ENCODE measurements at regions of chr9 and their contacts with region 1.

Region 1: DNA sequence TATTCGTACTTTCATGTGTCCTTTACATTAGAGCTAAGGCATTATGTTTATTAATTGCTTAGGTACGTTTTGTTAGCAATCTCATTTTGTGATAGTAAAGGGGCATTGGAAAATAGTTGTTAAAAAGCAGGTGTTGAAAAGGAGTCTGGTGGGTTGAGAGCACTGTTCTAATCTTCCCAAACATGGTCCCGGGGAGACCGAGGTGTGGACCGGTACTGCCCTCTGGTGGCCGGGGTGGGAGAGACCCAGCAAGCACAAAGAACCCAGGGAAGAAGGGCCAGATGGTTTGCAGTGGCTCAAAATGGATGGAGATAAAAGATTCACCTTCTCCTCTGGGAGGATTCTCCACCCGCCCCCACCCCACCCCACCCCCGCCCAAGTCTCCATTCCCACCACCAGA is 26.1 kb downstream of the IDNK start:
- DNase-seq: no peak
- H3K4me3 ChIP-seq: no peak overlapping the region
- CTCF ChIP-seq: peak; percentile 84

Region 2: DNA sequence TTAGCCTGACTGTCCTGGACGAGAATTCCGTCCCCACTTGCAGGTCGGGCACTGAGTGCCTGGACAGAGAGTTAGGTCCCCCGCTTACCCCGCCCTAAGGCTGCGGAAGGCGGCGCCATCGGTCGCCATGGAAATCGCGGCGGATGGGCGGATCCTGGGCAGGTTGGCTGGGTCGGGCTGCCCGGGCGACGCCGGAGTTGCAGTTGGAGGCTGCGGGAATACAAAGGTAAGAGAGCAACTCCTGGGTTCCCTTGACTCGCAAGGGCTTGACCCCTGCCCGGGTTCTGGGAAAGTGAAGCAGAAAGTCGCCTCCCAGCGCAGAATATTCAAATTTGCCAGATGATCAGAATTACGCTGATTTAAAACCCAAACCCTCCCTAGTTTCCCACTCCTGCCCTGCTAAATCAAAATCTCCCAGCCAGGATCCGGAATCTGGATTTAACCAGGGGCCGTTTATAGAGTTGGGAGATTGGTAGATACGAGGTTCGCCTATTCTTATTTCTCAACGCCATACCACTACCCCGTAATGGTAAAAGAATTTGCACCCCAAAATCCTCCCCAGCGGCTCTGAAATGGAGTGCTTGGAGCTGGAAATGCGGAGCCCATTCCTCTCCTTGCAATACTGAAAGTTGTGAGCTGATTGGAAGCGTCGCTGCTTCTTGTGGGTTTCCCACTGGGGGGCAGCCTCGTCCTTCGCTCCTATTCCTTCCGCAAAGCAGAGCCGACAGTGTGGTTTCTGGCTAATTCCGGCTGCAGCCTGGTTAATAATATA is 429.7 kb before region 1 on chr9:
- CTCF ChIA-PET with region 1: interaction called, 11 read pairs
- POLR2A ChIA-PET with region 1: no interaction called
- DNase-seq: peak; percentile 12
- H3K4me3 ChIP-seq: peak overlapping the region; percentile 62
- CTCF ChIP-seq: peak; percentile 77

Region 3: DNA sequence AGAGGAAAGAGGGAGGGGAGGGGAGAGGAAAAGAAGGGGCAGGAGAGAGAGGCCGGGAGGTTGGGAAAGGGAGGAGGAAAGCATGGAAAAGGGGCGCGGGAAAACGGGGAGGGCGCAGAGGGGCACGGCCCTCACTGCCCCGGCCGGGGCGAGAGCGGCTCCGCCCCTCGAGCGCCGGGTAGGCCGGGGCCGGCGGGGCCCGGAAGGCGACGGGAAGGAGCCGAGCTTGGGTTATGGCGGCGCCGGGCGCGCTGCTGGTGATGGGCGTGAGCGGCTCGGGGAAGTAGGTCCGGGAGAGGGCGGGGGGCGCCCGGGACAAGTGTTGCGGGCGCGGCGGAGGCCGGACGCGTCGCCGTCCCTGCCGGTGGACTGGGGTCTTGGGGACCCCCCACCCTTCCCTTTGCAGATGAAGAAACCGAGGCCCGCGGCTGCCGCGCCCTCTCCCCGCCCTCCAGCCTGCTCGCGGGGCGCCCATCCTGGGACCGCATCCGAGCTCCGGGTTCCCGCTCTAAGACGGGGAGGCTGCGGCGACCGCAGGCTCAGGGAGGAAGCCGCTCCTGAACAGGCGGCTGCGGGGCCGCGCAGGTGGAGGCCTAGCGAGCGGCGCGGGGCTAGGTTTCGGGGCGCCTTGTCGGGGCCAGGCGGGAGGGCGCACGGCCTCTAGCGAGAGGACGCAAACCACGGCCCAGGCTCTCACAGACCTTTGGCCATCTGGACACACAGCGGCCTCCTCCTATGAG is 26.0 kb before region 1 on chr9 and contains the start of gene IDNK:
- CTCF ChIA-PET with region 1: interaction called, 18 read pairs
- POLR2A ChIA-PET with region 1: no interaction called
- DNase-seq: no peak
- H3K4me3 ChIP-seq: peak within 1 kb of the TSS; percentile 65
- CTCF ChIP-seq: no peak

Region 4: DNA sequence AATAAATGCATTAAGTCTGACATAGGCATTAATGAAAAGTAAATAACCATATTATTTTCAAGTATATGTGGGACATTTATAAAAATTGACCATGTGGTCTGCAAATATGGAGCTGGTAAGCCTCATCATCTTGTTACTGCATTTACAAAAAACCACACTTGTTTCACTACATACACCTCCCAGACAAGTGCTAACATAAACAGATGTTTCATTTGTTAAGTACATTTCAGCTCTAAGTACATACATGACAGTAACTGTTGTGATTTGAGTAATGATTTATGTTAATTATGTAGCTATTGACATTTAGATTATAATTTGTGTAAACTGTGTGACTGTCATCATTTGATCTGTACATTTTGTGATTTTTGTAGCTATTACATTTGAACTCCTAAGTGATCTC is 12.3 kb before region 1 on chr9:
- CTCF ChIA-PET with region 1: interaction called, 25 read pairs
- POLR2A ChIA-PET with region 1: no interaction called
- DNase-seq: no peak
- H3K4me3 ChIP-seq: no peak overlapping the region
- CTCF ChIP-seq: no peak

Region 5: GRCh38 chr9:83665580-83666200 is 16.6 kb after region 1 on chr9:
- CTCF ChIA-PET with region 1: interaction called, 23 read pairs
- POLR2A ChIA-PET with region 1: interaction called, 3 read pairs
- DNase-seq: no peak
- H3K4me3 ChIP-seq: no peak overlapping the region
- CTCF ChIP-seq: no peak

Region 6: GRCh38 chr9:84261082-84261746 is 612.1 kb after region 1 on chr9:
- CTCF ChIA-PET with region 1: no interaction called
- POLR2A ChIA-PET with region 1: no interaction called
- DNase-seq: peak; percentile 10
- H3K4me3 ChIP-seq: no peak overlapping the region
- CTCF ChIP-seq: peak; percentile 92

Measured in AG04449 (cell line).